Activated B cell treated with CpG ODN at 0.5 μM for 24 hours (primary cell): ENCODE measurements at regions of chr5 and their contacts with region 1.

Region 1: DNA sequence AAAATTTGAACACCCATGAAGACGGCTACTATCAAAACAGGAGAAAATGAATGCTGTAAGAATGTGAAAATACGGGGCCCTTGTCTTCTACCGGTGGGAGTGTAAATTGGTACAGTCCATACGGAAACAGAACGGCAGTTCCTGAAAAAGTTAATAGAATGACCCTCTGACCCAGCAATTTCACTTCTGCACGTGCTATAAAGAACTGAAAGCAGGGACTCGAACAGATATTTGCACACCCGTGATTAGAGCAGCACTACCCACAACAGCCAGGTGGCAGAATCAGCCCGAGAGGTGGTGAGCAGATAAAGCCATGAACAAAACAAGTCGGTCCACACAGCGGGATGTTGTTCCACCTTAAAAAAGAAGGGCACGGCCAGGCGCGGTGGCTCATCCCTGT is 22.6 kb upstream of the SLC12A7 start:
- DNase-seq: no peak
- ATAC-seq: peak; percentile 81
- H3K4me3 Mint-ChIP-seq: peak overlapping the region; percentile 52
- H3K27ac Mint-ChIP-seq: peak overlapping the region; percentile 59
- H3K4me1 Mint-ChIP-seq: peaks cover 52% of the 10 kb centered on the region
- H3K27me3 Mint-ChIP-seq: peaks cover 5% of the 10 kb centered on the region
- CTCF ChIP-seq: no peak

Region 2: DNA sequence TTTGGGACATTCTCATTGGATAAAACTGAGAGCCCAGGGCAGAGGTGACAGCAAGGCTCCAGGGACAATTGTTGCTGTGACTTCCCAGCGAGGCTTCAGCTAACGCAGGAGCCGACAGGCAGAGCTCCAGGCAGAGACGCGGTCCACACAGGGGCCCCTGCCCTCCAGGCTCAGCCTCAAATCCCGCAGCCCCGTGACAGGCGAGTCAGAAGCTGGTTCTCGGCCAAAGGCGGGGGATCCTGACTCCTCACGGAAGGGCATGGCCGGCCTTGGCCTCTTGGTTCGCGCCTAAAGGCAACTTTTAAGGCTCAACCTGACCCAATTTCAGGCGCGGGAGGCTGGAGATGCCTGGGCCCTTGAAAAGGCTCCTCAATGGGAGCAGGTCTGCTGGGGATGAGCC is 43.9 kb before region 1 on chr5:
- CTCF ChIA-PET with region 1: no interaction called
- POLR2A ChIA-PET with region 1: no interaction called
- intact Hi-C with region 1: no loop called
- DNase-seq: no peak
- ATAC-seq: no peak
- H3K4me3 Mint-ChIP-seq: no peak overlapping the region
- H3K27ac Mint-ChIP-seq: no peak overlapping the region
- H3K4me1 Mint-ChIP-seq: no peaks in the 10 kb centered on the region
- H3K27me3 Mint-ChIP-seq: no peaks in the 10 kb centered on the region
- CTCF ChIP-seq: no peak

Region 3: DNA sequence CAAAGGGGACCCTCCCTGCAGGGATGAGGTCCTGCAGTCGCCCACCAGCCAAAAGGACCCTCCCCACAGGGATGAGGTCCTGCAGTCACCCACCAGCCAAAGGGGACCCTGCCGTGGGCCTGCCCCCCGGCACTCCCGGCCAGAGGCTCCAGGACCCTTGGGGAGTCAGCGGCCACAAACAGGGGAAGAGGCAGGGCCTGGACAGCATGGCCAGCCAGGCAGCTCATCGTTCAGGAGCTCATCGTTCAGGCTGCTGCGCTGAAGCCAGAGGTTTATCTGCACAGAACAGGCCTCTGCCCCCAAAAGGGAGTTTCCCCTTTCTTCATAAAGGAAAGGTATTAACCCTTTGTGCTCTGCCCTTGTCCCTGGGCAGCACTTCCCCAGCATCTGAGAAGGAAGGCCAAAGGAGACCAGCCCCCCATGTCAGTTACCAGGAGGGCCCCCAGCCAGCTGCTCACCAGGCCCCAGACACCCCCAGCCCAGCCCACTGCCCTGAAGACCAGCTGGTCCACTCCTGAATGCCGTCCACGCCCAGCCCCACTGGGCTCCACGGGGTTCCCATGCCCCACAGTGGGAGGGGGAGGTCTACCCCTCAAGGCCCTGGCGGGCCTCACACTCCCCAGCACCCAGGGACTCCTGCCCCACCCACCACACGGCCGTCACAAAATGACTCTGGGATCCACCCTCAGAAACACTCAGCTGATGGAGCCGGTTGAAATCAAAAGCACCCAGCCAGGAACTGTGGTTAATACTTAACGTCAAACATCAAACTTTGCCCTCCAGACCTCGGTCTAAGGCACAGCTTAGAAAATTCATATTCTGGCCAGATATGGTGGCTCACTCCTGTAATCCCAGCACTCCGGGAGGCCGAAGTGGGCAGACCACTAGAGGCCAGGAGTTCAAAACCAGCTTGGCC is 28.9 kb before region 1 on chr5:
- CTCF ChIA-PET with region 1: interaction called, 3 read pairs
- POLR2A ChIA-PET with region 1: interaction called, 5 read pairs
- intact Hi-C with region 1: loop called (anchors 2 kb)
- DNase-seq: no peak
- ATAC-seq: peak; percentile 68
- H3K4me3 Mint-ChIP-seq: peak overlapping the region; percentile 63
- H3K27ac Mint-ChIP-seq: peak overlapping the region; percentile 78
- H3K4me1 Mint-ChIP-seq: peaks cover 65% of the 10 kb centered on the region
- H3K27me3 Mint-ChIP-seq: no peaks in the 10 kb centered on the region
- CTCF ChIP-seq: no peak